ENCODE measurements at regions of chr10 and their contacts with region 1.

Region 1: DNA sequence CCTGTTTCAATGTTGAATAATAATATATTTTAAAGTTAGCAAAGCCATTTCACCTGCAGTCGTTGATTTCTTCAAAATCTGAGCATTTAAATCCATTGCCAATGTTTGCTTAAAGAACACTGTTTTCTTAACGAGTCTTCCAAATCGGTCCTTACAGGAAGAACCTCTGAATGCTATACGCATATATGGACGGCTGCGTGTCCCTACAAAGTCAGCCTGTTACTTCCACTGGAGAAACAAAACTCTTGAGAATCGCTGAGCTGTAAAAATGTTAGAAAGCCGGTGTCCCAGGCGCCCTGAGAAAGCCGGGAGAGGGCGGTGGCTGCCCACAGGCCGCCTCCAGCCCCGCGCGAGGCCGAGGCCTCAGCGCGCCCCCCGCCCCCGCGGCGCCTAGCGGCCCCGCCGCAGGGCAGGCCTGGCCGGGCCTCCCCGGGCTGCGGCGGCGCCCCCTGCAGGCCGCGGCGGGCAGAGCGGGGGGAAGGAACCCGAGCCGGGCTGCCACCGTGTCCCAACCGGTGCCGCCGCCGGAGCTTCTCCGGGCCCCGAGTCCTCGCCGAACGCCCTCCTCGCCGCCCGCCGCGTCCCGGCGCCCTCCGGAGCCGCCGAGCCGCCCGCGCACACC is at the start of gene FHIP2A:
- DNase-seq: peak; percentile 71 to 91 (median 86)
- H3K4me3 ChIP-seq: peak within 1 kb of the TSS; percentile 59 to 66
- H3K4me3 Mint-ChIP-seq: peak within 1 kb of the TSS; percentile 91 to 96 (median 94)
- H3K27ac ChIP-seq: peak within 1 kb of the TSS; percentile 73
- H3K27ac Mint-ChIP-seq: peak within 1 kb of the TSS; percentile 92 to 96 (median 95)
- H3K4me1 ChIP-seq: peaks cover 42% of the 10 kb centered on the region
- H3K4me1 Mint-ChIP-seq: peaks cover 26 to 39% (median 33%) of the 10 kb centered on the region in 4 donors
- H3K27me3 ChIP-seq: no peaks in the 10 kb centered on the region
- H3K27me3 Mint-ChIP-seq: no peaks in the 10 kb centered on the region
- total RNA-seq, gene FHIP2A: 25.1 to 32.1 TPM

Region 2: DNA sequence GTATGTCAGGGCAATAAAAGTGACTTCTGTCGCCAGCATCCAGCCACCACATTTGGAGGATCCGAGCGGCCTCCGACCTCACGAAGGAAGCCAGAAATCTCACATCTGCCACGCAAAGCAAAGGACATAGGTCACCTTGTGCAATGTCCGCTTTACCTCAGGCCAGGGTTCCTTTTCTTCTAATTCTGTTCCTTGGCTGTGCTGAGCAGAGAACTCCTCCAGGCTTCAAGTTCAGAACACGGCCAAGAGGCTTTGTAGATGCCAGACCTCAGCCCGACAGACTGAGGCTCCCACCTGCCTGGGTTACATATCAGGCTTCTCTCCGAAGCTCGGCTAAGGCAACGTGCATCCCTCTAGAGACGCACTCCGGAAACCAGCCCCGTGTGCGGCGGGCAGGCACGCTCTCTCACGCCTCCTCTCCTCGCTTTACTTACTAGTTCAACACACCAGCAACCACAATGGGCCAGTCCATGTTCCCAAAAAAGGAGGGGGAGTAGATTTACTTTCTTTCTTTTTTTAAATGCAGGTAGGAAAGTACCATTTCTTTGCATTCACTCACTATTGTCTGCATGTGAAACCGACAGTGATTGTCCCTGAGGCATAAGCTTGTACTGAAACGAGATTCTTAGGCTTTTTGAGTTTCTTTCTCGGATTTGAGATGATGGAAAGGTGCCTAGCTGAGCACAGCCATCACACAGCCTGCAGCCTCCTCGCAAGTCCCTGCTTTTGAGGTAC is 294.7 kb before region 1 on chr10:
- CTCF ChIA-PET with region 1: interaction called, 3 read pairs
- POLR2A ChIA-PET with region 1: interaction called, 16 read pairs
- intact Hi-C with region 1: no loop called
- DNase-seq: peak; percentile 90 to 96 (median 94)
- H3K4me3 ChIP-seq: peak overlapping the region; percentile 78 to 82
- H3K4me3 Mint-ChIP-seq: peak overlapping the region; percentile 90 to 99 (median 96)
- H3K27ac ChIP-seq: peak overlapping the region; percentile 80
- H3K27ac Mint-ChIP-seq: peak overlapping the region; percentile 94 to 100 (median 99)
- H3K4me1 ChIP-seq: peaks cover 55% of the 10 kb centered on the region
- H3K4me1 Mint-ChIP-seq: peaks cover 32 to 68% (median 53%) of the 10 kb centered on the region in 4 donors
- H3K27me3 ChIP-seq: no peaks in the 10 kb centered on the region
- H3K27me3 Mint-ChIP-seq: no peaks in the 10 kb centered on the region

Region 3: GRCh38 chr10:114779803-114780609 is 41.4 kb before region 1 on chr10:
- CTCF ChIA-PET with region 1: interaction called, 16 read pairs
- POLR2A ChIA-PET with region 1: no interaction called
- intact Hi-C with region 1: no loop called
- DNase-seq: no peak
- H3K4me3 ChIP-seq: no peak overlapping the region
- H3K4me3 Mint-ChIP-seq: no peak overlapping the region
- H3K27ac ChIP-seq: no peak overlapping the region
- H3K27ac Mint-ChIP-seq: no peak overlapping the region
- H3K4me1 ChIP-seq: no peaks in the 10 kb centered on the region
- H3K4me1 Mint-ChIP-seq: peaks cover 0 to 1% (median 0%) of the 10 kb centered on the region in 4 donors
- H3K27me3 ChIP-seq: peaks cover 4% of the 10 kb centered on the region
- H3K27me3 Mint-ChIP-seq: no peaks in the 10 kb centered on the region

Region 4: DNA sequence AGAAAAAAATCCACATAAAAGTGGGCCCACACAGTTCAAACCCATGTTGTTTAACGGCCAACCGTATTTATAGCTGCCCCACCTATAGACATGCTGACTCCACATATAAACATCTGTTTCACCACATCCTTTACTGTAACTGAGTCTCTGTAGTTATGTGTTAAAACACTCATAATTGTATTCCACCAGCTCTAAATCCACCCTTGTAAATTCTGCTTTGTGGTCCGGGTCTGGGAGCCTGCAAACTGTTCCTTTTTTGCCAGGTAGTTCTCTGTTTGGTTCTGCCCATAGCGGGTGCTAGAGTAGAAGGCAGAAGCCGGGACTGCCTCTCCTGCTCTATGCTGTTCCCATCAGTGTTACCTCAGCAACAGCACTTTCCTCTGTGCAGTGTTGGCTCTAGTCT is 20.0 kb before region 1 on chr10:
- CTCF ChIA-PET with region 1: interaction called, 16 read pairs
- POLR2A ChIA-PET with region 1: interaction called, 32 read pairs
- intact Hi-C with region 1: loop called (anchors 2 kb)
- DNase-seq: peak; percentile 35 to 57 (median 44)
- H3K4me3 ChIP-seq: peak overlapping the region in 1 of 2 donors; percentile 34
- H3K4me3 Mint-ChIP-seq: peak overlapping the region; percentile 35 to 79 (median 73)
- H3K27ac ChIP-seq: no peak overlapping the region
- H3K27ac Mint-ChIP-seq: peak overlapping the region; percentile 22 to 89 (median 62)
- H3K4me1 ChIP-seq: peaks cover 40% of the 10 kb centered on the region
- H3K4me1 Mint-ChIP-seq: peaks cover 20 to 29% (median 24%) of the 10 kb centered on the region in 4 donors
- H3K27me3 ChIP-seq: no peaks in the 10 kb centered on the region
- H3K27me3 Mint-ChIP-seq: no peaks in the 10 kb centered on the region

Region 5: DNA sequence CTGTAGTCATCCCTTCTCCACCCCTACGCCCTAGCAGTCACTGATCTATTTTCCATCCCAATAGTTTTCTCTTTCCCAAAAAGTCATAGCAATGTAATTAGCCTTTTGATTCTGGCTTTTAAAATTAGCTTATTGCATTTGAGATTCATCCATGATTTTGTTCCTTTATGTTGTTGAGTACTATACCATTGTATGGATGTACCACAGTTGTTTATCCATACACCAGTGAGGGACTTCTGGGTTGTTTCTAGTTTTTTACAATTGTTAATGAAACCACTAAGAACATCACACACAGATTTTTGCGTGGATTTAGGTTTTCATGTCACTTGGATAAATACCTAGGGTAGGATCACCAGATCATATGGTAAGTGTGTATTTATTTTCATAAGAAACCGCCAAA is 16.3 kb after region 1 on chr10:
- CTCF ChIA-PET with region 1: interaction called, 26 read pairs
- POLR2A ChIA-PET with region 1: interaction called, 21 read pairs
- intact Hi-C with region 1: no loop called
- DNase-seq: no peak
- H3K4me3 ChIP-seq: no peak overlapping the region
- H3K4me3 Mint-ChIP-seq: no peak overlapping the region
- H3K27ac ChIP-seq: no peak overlapping the region
- H3K27ac Mint-ChIP-seq: no peak overlapping the region
- H3K4me1 ChIP-seq: no peaks in the 10 kb centered on the region
- H3K4me1 Mint-ChIP-seq: peaks cover 0 to 6% (median 0%) of the 10 kb centered on the region in 4 donors
- H3K27me3 ChIP-seq: no peaks in the 10 kb centered on the region
- H3K27me3 Mint-ChIP-seq: no peaks in the 10 kb centered on the region

Region 6: DNA sequence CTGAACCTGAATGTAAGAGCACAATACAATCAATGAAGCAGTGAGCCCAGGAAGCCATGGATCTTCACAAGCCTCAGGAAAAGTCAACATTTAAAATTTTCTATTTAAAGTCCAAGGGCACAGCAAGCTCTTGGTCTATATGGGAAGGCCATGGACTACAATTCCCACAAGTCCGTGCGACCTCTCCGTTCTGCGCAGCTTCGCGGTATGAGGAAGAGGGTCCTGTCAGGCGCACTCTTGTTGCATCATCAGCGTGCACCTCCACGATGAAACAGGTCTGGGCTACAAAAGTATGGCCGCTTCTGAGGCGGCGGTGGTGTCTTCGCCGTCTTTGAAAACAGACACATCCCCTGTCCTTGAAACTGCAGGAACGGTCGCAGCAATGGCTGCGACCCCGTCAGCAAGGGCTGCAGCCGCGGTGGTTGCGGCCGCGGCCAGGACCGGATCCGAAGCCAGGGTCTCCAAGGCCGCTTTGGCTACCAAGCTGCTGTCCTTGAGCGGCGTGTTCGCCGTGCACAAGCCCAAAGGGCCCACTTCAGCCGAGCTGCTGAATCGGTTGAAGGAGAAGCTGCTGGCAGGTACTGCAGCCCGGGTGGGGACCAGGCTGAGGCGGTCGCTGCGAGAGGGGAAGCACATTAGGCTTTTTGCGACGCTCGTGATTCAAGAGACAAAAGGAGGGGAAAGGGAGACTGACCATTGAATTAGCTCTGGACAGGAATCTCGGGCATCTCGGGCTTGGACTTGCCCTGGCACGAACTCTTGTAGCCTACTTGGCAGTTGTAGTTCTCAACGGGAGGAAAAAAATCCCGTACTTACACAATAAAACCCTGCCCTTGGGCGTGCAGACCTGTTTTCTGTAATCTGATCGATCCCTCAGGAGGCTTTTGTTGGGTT is 116.8 kb after region 1 on chr10 and contains the start of gene TRUB1:
- CTCF ChIA-PET with region 1: interaction called, 6 read pairs
- POLR2A ChIA-PET with region 1: interaction called, 6 read pairs
- intact Hi-C with region 1: loop called (anchors 1 kb)
- DNase-seq: peak; percentile 85 to 93 (median 87)
- H3K4me3 ChIP-seq: peak within 1 kb of the TSS; percentile 67 to 73
- H3K4me3 Mint-ChIP-seq: peak within 1 kb of the TSS; percentile 94 to 97 (median 96)
- H3K27ac ChIP-seq: peak within 1 kb of the TSS; percentile 75
- H3K27ac Mint-ChIP-seq: peak within 1 kb of the TSS; percentile 93 to 98 (median 97)
- H3K4me1 ChIP-seq: peaks cover 15% of the 10 kb centered on the region
- H3K4me1 Mint-ChIP-seq: peaks cover 21 to 41% (median 31%) of the 10 kb centered on the region in 4 donors
- H3K27me3 ChIP-seq: no peaks in the 10 kb centered on the region
- H3K27me3 Mint-ChIP-seq: no peaks in the 10 kb centered on the region
- total RNA-seq, gene TRUB1: 11.3 to 14.5 TPM

Measured in CD4-positive, alpha-beta memory T cell (primary cell).